Sciatic nerve (tissue), 2 donors: ENCODE measurements at regions of chr13 and their contacts with region 1.

Region 1: DNA sequence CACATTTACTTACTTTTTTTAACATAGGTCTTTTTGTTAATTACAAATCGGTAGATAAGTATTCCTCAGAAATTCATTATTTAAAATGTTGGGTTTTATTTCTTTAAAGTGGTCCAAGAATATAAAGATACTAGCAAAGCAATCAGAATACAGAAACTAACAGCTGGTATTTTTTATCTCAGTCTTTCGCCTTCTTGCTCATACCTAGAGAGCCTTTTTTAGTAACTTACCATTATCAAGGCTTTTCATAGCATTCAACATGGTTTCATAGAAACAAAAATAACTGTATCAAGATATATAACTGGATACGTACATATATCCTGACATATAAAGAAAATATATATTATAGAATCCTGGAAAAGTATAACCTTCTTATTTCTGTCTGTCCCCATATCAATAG is 227.8 kb upstream of the MIR17HG start:
- DNase-seq: no peak
- ATAC-seq: no peak

Region 2: DNA sequence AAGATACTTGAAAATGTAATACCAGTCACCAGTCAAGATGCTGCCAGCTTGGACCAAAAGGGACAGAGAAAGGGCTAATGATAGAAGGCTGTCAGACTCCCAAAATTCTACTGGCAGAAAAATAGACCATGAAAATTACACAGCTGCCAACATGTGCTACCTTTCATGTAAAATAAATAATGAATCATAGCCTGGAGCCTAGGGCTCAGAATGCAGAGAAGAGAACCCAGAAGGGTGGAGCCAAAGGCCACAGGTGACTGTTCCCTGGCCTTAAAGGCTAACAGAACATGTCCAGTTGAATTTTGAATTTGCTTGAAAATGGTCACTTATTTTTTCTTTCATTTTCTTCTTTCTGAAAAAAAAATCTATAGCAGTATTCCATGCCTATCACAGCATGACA is 1599.2 kb before region 1 on chr13:
- intact Hi-C with region 1: loop called (anchors 5 kb)
- DNase-seq: no peak
- ATAC-seq: no peak

Region 3: DNA sequence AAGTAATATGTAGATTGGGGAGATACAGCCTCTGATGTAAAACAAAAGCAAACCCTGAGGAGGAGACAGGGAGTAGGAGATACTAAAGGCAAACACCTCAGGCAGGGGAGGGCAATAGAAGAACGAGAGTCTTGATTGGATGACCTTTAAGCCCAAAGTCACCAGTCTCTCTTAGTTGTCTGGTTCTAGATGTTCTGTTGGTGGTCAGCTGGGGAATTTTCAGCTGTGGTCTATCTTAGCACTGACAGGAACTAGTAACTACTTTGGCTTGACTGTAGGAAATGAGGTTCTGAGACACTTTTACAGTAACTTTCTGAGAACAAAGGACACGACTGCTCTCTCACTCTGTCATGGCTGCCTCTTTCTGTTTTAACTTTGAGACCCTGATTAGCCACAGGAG is 62.9 kb before region 1 on chr13:
- intact Hi-C with region 1: no loop called
- DNase-seq: no peak
- ATAC-seq: no peak